Activated naive CD4-positive, alpha-beta T cell treated with anti-CD3 and anti-CD28 coated beads for 36 hours (primary cell): ENCODE measurements at regions of chr21 and their contacts with region 1.

Region 1: DNA sequence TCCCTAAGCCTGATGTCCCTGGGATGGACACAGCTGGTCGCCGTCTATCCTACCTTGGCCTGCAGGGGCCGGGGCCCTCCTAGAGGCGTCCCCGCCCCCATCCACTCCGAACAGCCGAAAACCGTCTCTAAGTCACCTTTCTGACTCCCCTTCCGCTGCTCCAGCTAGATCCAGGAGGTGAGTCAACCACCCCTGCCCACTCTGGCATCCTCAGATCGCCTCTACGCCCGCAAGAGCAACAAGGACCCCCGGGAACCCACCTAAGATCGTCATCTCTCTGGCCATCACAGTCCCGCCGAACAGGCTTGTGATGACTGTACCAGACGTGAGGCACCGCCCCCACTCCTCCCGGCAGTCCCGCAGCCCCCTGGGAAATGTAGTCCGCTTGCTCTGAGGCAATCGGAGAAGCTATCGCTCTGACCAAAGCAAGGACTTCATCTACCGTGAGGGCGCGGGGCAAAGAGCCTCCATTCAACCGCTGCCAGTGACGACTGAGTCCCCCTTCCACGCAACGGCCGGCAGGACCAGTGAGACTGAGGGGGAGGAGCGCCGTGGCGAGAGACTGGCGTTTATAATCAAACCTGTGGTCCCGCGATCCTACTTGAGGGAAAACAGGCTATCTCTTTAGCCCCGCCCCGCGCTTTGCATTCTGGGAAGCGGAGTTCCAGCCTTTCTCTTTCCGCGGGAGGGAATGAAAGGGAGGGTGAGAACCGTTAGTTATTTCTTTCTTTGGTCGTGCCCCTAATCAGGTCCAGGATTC is at the start of gene HSPA13:
- DNase-seq: peak; percentile 100
- H3K4me3 Mint-ChIP-seq: peak within 1 kb of the TSS; percentile 100
- H3K27ac Mint-ChIP-seq: peak within 1 kb of the TSS; percentile 100
- H3K4me1 Mint-ChIP-seq: peaks cover 24% of the 10 kb centered on the region
- H3K27me3 Mint-ChIP-seq: no peaks in the 10 kb centered on the region
- total RNA-seq, gene HSPA13: 41.1 to 41.4 TPM

Region 2: GRCh38 chr21:14012409-14012808 is 370.6 kb before region 1 on chr21:
- CTCF ChIA-PET with region 1: no interaction called
- intact Hi-C with region 1: no loop called
- DNase-seq: no peak
- H3K4me3 Mint-ChIP-seq: no peak overlapping the region
- H3K27ac Mint-ChIP-seq: no peak overlapping the region
- H3K4me1 Mint-ChIP-seq: no peaks in the 10 kb centered on the region
- H3K27me3 Mint-ChIP-seq: no peaks in the 10 kb centered on the region

Region 3: DNA sequence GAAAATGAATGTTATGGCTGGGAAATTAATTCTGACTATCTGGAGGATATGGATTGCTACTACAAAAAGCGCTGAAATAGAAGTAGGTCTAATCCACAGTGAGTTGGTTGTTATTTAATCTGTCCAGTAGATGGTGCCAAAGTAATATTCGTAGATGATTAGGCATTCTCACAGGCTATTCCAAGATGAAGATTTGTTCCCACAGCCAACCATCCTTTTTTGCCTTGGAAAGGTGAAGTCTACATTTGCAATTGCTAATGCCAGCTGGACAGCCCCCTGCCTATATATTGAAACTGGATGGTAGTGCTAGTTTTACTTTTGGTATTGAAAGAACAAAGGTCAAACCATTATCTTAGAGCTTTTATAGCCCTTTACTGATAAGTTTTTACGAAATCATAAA is 123.3 kb before region 1 on chr21:
- CTCF ChIA-PET with region 1: no interaction called
- intact Hi-C with region 1: loop called (anchors 5 kb)
- DNase-seq: no peak
- H3K4me3 Mint-ChIP-seq: no peak overlapping the region
- H3K27ac Mint-ChIP-seq: no peak overlapping the region
- H3K4me1 Mint-ChIP-seq: peaks cover 8% of the 10 kb centered on the region
- H3K27me3 Mint-ChIP-seq: no peaks in the 10 kb centered on the region

Region 4: GRCh38 chr21:14533504-14534428 is 150.8 kb after region 1 on chr21:
- CTCF ChIA-PET with region 1: no interaction called
- intact Hi-C with region 1: loop called (anchors 2 kb)
- DNase-seq: no peak
- H3K4me3 Mint-ChIP-seq: peak overlapping the region; percentile 74
- H3K27ac Mint-ChIP-seq: peak overlapping the region; percentile 96
- H3K4me1 Mint-ChIP-seq: peaks cover 77% of the 10 kb centered on the region
- H3K27me3 Mint-ChIP-seq: no peaks in the 10 kb centered on the region

Region 5: GRCh38 chr21:14620152-14620551 is 237.1 kb after region 1 on chr21:
- CTCF ChIA-PET with region 1: no interaction called
- intact Hi-C with region 1: loop called (anchors 5 kb)
- DNase-seq: peak; percentile 30
- H3K4me3 Mint-ChIP-seq: no peak overlapping the region
- H3K27ac Mint-ChIP-seq: peak overlapping the region; percentile 25
- H3K4me1 Mint-ChIP-seq: peaks cover 27% of the 10 kb centered on the region
- H3K27me3 Mint-ChIP-seq: no peaks in the 10 kb centered on the region

Region 6: GRCh38 chr21:14737922-14738321 is 354.9 kb after region 1 on chr21:
- CTCF ChIA-PET with region 1: interaction called, 7 read pairs
- intact Hi-C with region 1: loop called (anchors 1 kb)
- DNase-seq: peak; percentile 62
- H3K4me3 Mint-ChIP-seq: no peak overlapping the region
- H3K27ac Mint-ChIP-seq: no peak overlapping the region
- H3K4me1 Mint-ChIP-seq: peaks cover 31% of the 10 kb centered on the region
- H3K27me3 Mint-ChIP-seq: no peaks in the 10 kb centered on the region

Region 7: DNA sequence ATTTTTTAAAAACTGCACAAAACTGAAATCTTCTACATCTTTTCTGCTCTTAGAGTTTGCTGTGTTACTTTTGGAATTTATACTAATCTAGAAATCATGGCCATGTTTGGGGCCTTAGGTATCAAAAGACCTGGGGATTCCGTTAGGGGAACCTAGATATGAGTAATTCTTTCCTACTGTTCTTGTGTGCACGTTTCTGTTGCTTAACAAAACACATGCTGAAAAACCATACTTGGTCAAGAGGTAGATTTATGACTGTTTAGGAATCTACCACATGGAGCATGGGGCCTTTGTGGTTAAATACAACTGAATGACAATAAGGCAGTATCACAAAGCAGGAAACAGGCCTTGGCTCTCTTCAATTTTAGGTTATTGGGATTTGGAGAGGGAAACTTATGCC is 1054.9 kb after region 1 on chr21:
- CTCF ChIA-PET with region 1: no interaction called
- intact Hi-C with region 1: loop called (anchors 2 kb)
- DNase-seq: peak; percentile 28
- H3K4me3 Mint-ChIP-seq: no peak overlapping the region
- H3K27ac Mint-ChIP-seq: peak overlapping the region; percentile 36
- H3K4me1 Mint-ChIP-seq: peaks cover 19% of the 10 kb centered on the region
- H3K27me3 Mint-ChIP-seq: no peaks in the 10 kb centered on the region